Right ventricle myocardium inferior (tissue), 1 donor: ENCODE measurements at regions of chr5 and their contacts with region 1.

Region 1: DNA sequence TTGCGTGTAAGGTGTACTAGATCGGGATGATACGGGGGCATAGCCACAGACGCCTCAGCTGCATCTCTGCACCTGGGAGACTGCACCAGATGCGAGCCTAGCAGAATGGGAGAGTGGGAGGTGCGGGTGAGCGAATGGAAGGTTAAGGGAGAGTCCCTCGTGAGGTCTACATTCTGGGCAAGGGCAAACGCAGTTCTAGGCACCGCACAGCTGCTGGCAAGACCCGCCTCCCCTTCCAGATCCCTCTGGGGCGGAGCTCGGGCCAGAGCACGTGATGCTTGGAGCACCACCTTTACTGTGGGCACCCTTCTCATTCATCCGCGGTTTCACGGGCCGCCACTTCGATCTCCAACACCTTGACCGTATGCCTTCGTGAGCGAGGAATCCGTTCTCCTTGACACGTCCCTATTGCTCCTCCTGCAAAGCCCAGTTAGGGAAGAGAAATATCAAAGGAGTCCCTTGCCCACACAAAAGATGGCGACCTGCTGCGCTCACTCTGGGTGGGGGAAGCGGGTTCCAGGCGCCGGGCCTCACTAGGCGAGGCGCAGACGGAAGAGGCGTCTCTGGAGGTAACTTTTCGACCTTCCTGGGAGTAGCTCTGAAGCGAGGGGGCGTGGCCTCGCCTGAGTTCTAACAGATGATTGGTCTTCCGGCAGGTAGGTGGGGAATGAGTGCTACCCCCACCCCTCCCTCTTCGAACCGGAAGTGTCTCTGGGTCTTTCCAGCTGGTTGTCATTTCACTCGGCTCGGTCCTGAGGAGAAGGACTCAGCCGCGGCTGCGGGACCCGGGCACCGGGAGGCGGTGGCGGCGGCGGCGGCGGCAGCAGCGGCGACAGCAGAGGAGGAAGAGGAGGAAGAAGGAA is at the start of gene CPEB4:
- DNase-seq: peak; percentile 99
- ATAC-seq: peak; percentile 97
- total RNA-seq, gene CPEB4: 116 TPM

Region 2: DNA sequence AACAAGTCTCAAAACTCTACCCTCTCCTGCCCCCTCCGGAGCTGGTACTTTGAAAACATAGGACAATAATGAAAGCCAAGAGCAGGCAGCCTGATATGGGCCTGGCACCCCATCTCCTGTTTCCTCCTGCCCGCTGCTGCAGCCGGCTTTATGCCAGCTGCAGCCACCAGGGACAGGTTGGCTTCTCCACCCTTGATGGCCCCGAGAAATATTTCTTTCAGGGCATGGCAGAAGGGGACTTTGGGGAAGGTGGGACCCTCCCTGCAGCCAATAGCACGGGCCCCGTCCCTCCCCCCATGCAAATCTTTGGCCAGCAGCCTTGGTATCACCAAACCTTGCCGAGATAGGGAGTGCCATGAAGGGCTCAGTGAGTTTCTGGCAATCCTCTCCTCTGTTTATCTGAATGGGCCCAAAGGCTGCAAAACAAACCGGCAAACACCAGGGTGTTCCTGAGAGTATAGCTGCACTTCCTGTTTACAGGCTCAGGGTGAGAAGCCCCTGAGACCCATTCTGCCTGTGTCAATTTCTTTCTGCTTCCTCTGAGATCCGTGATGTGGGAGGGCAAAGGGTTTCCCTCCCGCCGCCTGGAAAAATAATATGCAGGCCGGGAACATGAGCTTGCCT is 198.0 kb before region 1 on chr5:
- intact Hi-C with region 1: loop called (anchors 10 kb)
- DNase-seq: no peak
- ATAC-seq: peak; percentile 75

Region 3: GRCh38 chr5:173775261-173776129 is 112.3 kb before region 1 on chr5:
- intact Hi-C with region 1: loop called (anchors 2 kb)
- DNase-seq: no peak
- ATAC-seq: no peak

Region 4: GRCh38 chr5:173935396-173935795 is 47.6 kb after region 1 on chr5:
- intact Hi-C with region 1: loop called (anchors 5 kb)
- DNase-seq: no peak
- ATAC-seq: no peak